Activated CD4-positive, alpha-beta memory T cell treated with anti-CD3 and anti-CD28 coated beads, Interleukin-2, amount 10 ng/mL, durations not matched to agents 7 days and 5 days (primary cell): ENCODE measurements at regions of chr15 and their contacts with region 1.

Region 1: DNA sequence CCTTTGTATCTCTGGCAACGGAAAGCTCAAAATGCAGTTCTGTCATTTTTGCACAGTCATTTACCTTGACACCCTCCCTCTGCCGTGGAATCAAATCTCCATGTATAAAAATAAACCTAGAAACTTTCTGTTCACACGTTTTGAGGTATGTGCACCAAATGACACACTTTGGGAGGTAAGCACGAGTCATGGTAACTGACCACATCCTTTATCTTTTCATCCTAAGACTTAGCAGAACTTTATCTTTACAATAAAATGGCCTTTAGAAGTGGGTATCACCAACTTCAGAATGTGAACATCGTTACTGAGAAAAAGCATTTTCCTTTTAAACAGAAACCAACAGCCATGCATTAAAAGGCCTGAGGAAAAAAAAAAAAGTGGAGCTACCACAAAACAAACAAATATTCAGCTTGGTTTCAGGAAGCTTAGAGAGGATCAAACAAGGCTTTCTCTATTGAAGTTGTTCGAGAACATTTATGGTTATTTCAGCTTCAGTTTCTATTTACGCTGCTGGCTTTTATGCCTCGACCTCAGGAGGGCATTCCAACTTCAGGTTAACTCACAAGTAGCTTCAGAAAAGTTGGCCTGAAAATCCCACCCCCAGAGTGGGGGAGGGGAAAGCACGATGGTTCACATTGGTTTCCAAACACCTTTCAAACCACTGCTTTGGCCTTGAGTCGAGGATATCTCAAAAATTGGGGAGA is 171.1 kb upstream of the ICE2 start:
- DNase-seq: peak; percentile 39
- H3K4me3 Mint-ChIP-seq: peak overlapping the region; percentile 42
- H3K27ac Mint-ChIP-seq: peak overlapping the region; percentile 70
- H3K4me1 Mint-ChIP-seq: peaks cover 38% of the 10 kb centered on the region
- H3K27me3 Mint-ChIP-seq: peaks cover 1% of the 10 kb centered on the region

Region 2: DNA sequence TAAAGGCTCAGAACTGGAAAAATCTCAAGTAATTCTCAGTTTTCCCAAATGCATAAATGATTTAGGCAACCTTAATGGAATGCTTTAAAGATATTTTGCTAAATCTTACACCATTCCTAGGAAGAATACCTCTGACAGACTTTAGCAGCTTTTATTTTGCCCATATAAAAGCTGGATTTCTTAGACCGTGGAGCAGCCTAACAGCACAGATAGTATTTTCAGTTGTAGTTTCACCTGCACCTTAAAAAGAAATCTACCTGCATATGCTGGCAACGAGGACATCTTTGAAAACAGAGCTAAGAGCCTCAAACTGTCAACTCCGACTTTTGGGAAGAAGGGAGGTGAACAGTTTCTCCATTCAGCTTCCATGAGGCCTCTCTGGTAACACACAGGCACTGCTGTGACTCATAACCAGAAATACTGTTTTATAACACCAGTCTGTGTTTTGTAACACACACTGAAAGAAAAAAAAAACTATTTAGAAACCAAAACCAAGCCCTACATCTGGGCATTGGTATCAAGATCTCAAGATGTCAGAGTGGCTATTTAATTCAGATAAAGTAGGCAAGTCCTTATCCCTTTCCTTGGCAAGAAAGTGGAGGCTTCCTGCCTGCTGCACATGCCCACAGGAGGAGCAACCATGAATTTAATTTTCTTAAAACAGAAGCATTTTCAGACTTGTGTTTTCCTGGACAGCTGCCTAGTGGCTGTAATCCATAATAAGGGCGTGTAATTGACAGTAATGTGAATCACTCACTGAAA is 10.5 kb after region 1 on chr15:
- CTCF ChIA-PET with region 1: interaction called, 4 read pairs
- POLR2A ChIA-PET with region 1: interaction called, 10 read pairs
- DNase-seq: no peak
- H3K4me3 Mint-ChIP-seq: no peak overlapping the region
- H3K27ac Mint-ChIP-seq: no peak overlapping the region
- H3K4me1 Mint-ChIP-seq: peaks cover 11% of the 10 kb centered on the region
- H3K27me3 Mint-ChIP-seq: no peaks in the 10 kb centered on the region